PC-9 (cell line): ENCODE measurements at regions of chr4 and their contacts with region 1.

Region 1: GRCh38 chr4:48698029-48698971 is 81.8 kb downstream of the FRYL start:
- DNase-seq: peak; percentile 76 to 90
- H3K4me3 ChIP-seq: peak overlapping the region; percentile 49; the same call in 1 of the 2 replicates
- H3K27ac ChIP-seq: peak overlapping the region; percentile 89
- H3K4me1 ChIP-seq: peaks cover 48% of the 10 kb centered on the region
- H3K27me3 ChIP-seq: no peaks in the 10 kb centered on the region
- CTCF ChIP-seq: no peak

Region 2: GRCh38 chr4:48727666-48728459 is 29.6 kb after region 1 on chr4:
- CTCF ChIA-PET with region 1: no interaction called
- POLR2A ChIA-PET with region 1: no interaction called
- intact Hi-C with region 1: loop called (anchors 2 kb)
- DNase-seq: no peak
- H3K4me3 ChIP-seq: no peak overlapping the region
- H3K27ac ChIP-seq: peak overlapping the region; percentile 89
- H3K4me1 ChIP-seq: peaks cover 31% of the 10 kb centered on the region
- H3K27me3 ChIP-seq: no peaks in the 10 kb centered on the region
- CTCF ChIP-seq: no peak

Region 3: DNA sequence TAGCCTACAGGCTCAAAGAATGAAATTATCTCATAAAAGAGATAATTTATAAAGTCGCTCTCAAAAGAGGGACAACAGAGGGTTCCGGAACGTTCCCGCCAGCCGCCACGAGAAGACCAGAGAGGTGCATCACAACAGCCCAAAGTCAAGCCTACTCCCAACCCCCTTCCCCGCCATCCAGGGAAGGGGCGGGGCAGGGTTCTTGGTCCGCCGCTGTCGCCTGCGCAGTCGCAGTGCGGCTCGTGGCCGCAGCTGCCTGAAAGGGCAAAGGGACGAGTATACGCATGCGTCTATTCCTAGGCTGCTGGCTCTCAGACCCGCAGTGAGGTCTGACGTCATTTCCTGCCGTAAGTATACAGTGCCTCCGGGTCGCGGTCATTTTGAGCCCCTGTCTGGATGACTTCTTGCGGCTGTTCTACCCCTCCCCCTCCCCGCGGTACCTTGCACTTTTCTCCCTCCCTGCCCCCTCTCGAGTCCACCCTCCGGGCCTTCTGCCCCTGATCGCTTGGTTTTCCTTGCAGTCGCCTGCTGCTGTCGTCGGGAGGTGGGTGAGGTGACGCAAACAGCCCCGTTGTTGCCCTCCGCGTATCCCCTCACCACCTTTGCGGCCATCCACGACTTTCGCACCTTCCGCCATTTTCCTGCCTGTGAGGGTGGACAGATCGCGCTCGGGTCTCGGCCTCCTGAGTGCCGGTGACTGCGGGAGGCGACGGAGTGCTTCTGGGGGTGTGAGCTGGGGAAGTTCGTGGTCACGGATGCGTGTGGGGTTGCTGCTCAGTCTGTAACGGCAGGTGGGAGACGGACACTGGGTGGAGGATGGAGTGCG is 132.6 kb after region 1 on chr4 and contains the start of gene OCIAD1:
- CTCF ChIA-PET with region 1: no interaction called
- POLR2A ChIA-PET with region 1: interaction called, 5 read pairs
- intact Hi-C with region 1: loop called (anchors 2 kb)
- DNase-seq: peak; percentile 94 to 96
- H3K4me3 ChIP-seq: peak within 1 kb of the TSS; percentile 92
- H3K27ac ChIP-seq: peak within 1 kb of the TSS; percentile 81
- H3K4me1 ChIP-seq: peaks cover 19% of the 10 kb centered on the region
- H3K27me3 ChIP-seq: no peaks in the 10 kb centered on the region
- CTCF ChIP-seq: no peak
- total RNA-seq, gene OCIAD1: 104 and 110 TPM in 2 replicates

Region 4: GRCh38 chr4:48954314-48954713 is 256.0 kb after region 1 on chr4:
- CTCF ChIA-PET with region 1: no interaction called
- POLR2A ChIA-PET with region 1: no interaction called
- intact Hi-C with region 1: loop called (anchors 2 kb)
- DNase-seq: no peak
- H3K4me3 ChIP-seq: peak overlapping the region; percentile 9; the same call in 1 of the 2 replicates
- H3K27ac ChIP-seq: peak overlapping the region; percentile 85
- H3K4me1 ChIP-seq: peaks cover 33% of the 10 kb centered on the region
- H3K27me3 ChIP-seq: no peaks in the 10 kb centered on the region
- CTCF ChIP-seq: no peak